ENCODE measurements at regions of chr4 and their contacts with region 1.

Region 1: GRCh38 chr4:83334425-83335241 is at the start of gene HPSE:
- DNase-seq: peak; percentile 48 to 73 (median 69)
- ATAC-seq: peak; percentile 94
- H3K4me3 ChIP-seq: peak within 1 kb of the TSS; percentile 80
- H3K4me3 Mint-ChIP-seq: peak within 1 kb of the TSS; percentile 85 to 97 (median 92)
- H3K27ac ChIP-seq: peak within 1 kb of the TSS; percentile 70
- H3K27ac Mint-ChIP-seq: peak within 1 kb of the TSS; percentile 72 to 95 (median 87)
- H3K4me1 ChIP-seq: peaks cover 11% of the 10 kb centered on the region in 2 donors
- H3K4me1 Mint-ChIP-seq: peaks cover 16 to 47% (median 33%) of the 10 kb centered on the region in 7 donors
- H3K27me3 ChIP-seq: no peaks in the 10 kb centered on the region
- H3K27me3 Mint-ChIP-seq: peaks cover 0 to 26% (median 0%) of the 10 kb centered on the region in 5 donors
- total RNA-seq, gene HPSE: 4.4 to 16.2 (median 6.6) TPM

Region 2: GRCh38 chr4:83348074-83348473 is 13.4 kb after region 1 on chr4:
- CTCF ChIA-PET with region 1: no interaction called
- POLR2A ChIA-PET with region 1: interaction called, 7 read pairs
- intact Hi-C with region 1: loop called (anchors 2 kb)
- DNase-seq: no peak
- ATAC-seq: no peak
- H3K4me3 ChIP-seq: no peak overlapping the region
- H3K4me3 Mint-ChIP-seq: no peak overlapping the region
- H3K27ac ChIP-seq: no peak overlapping the region
- H3K27ac Mint-ChIP-seq: peak overlapping the region in 1 of 9 donors; percentile 70
- H3K4me1 ChIP-seq: peaks cover 0 to 7% of the 10 kb centered on the region in 2 donors
- H3K4me1 Mint-ChIP-seq: peaks cover 7 to 19% (median 10%) of the 10 kb centered on the region in 7 donors
- H3K27me3 ChIP-seq: no peaks in the 10 kb centered on the region
- H3K27me3 Mint-ChIP-seq: peaks cover 0 to 14% (median 3%) of the 10 kb centered on the region in 5 donors

Region 3: GRCh38 chr4:83387753-83388676 is 53.4 kb after region 1 on chr4:
- CTCF ChIA-PET with region 1: no interaction called
- POLR2A ChIA-PET with region 1: no interaction called
- intact Hi-C with region 1: loop called (anchors 2 to 5 kb)
- DNase-seq: peak in 7 of 9 donors; percentile 31 to 60 (median 55)
- ATAC-seq: peak; percentile 73
- H3K4me3 ChIP-seq: no peak overlapping the region
- H3K4me3 Mint-ChIP-seq: peak overlapping the region in 2 of 10 donors; percentile 5 to 32
- H3K27ac ChIP-seq: no peak overlapping the region
- H3K27ac Mint-ChIP-seq: peak overlapping the region in 8 of 9 donors; percentile 15 to 84 (median 60)
- H3K4me1 ChIP-seq: peaks cover 0 to 11% of the 10 kb centered on the region in 2 donors
- H3K4me1 Mint-ChIP-seq: peaks cover 0 to 20% (median 11%) of the 10 kb centered on the region in 7 donors
- H3K27me3 ChIP-seq: no peaks in the 10 kb centered on the region
- H3K27me3 Mint-ChIP-seq: peaks cover 0 to 9% (median 0%) of the 10 kb centered on the region in 5 donors